HCT116 (cell line): ENCODE measurements at regions of chr18 and their contacts with region 1.

Region 1: GRCh38 chr18:8478166-8478967 is 130.9 kb upstream of the RAB12 start:
- DNase-seq: peak; percentile 33
- ATAC-seq: peak; percentile 95
- H3K4me3 ChIP-seq: no peak overlapping the region
- H3K27ac ChIP-seq: no peak overlapping the region
- H3K4me1 ChIP-seq: no peaks in the 10 kb centered on the region
- H3K27me3 ChIP-seq: peaks cover 7% of the 10 kb centered on the region; the same call in 1 of the 2 replicates
- CTCF ChIP-seq: peak; percentile 29 to 97 (median 83); a peak in 5 of 6 replicates
- POLR2A ChIP-seq: no peak
- RAD21 ChIP-seq: peak; percentile 19; the same call in 1 of the 2 replicates

Region 2: GRCh38 chr18:8988261-8988871 is 510.0 kb after region 1 on chr18:
- CTCF ChIA-PET with region 1: no interaction called
- POLR2A ChIA-PET with region 1: no interaction called
- RAD21 ChIA-PET with region 1: no interaction called
- intact Hi-C with region 1: loop called (anchors 10 kb)
- DNase-seq: peak; percentile 52
- ATAC-seq: peak; percentile 96
- H3K4me3 ChIP-seq: no peak overlapping the region
- H3K27ac ChIP-seq: no peak overlapping the region
- H3K4me1 ChIP-seq: peaks cover 0 to 23% of the 10 kb centered on the region in 2 experiments; a peak in 3 of 4 replicates
- H3K27me3 ChIP-seq: no peaks in the 10 kb centered on the region
- CTCF ChIP-seq: peak; percentile 62 to 86 (median 81); a peak in 5 of 6 replicates
- POLR2A ChIP-seq: no peak
- RAD21 ChIP-seq: peak; percentile 84